Heart right ventricle (tissue), 16 donors: ENCODE measurements at regions of chr6 and their contacts with region 1.

Region 1: DNA sequence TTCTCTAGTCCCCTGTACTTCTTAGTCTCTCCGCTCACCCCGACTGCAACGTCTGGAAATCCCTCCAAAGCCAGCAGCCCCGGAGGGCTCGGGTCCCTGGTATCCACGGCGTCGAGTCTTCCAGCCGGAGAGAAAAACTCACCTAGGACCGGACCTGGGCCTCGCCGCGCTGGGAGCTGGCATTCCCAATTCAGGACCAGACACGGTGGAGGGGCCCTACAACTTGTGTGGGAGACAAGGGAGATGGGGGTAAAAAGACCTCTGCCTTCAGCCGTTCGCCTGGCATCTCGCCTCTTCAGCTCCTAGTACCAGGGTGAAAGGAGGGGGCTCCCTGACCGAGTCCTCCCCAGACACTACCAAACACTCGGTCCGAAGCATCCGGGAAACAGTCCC is 64.3 kb downstream of the GPX5 start:
- DNase-seq: no peak
- ATAC-seq: no peak
- H3K4me3 ChIP-seq: no peak overlapping the region
- H3K27ac ChIP-seq: no peak overlapping the region
- H3K4me1 ChIP-seq: peaks cover 0 to 15% (median 0%) of the 10 kb centered on the region in 9 donors
- H3K27me3 ChIP-seq: peaks cover 6 to 100% (median 93%) of the 10 kb centered on the region in 7 donors
- CTCF ChIP-seq: no peak

Region 2: DNA sequence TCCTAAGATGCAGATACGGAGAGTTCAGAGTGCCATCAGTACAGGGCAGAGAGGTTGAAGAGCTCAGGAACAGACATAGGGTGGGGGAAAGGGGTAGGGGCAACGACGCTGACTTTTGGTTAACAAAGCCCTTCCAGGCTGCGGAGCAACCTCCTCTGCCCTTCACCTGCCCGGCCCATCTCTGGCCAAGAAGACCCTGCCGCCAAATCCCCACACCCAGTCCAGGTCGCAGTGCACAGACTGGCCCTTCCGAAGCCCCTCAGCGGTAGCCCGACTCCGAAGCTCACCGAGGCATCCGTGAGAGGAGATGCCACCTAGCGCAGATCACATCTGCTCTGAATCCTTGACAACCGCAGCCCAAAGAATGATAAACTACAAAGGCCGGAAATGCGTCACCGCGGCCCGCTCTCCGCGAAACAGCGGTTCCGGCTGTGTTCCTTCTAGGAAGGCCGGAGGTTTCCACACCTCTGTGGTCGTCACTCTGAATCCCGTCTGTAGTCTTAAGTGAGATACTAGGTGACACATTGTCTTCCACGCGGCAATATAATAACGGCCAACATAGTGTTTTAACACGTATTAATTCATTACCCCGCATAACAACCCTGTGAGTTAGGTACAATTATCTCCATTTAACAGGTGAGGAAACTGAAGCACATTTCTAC is 146.7 kb before region 1 on chr6 and contains the start of gene ZSCAN23:
- intact Hi-C with region 1: no loop called
- DNase-seq: peak; percentile 71 to 77
- ATAC-seq: peak; percentile 88 to 99 (median 96)
- H3K4me3 ChIP-seq: peak within 1 kb of the TSS; percentile 48 to 93 (median 72)
- H3K27ac ChIP-seq: peak within 1 kb of the TSS in 8 of 10 donors; percentile 43 to 75 (median 62)
- H3K4me1 ChIP-seq: peaks cover 0 to 17% (median 10%) of the 10 kb centered on the region in 9 donors
- H3K27me3 ChIP-seq: peaks cover 0 to 44% (median 24%) of the 10 kb centered on the region in 7 donors
- CTCF ChIP-seq: no peak
- total RNA-seq, gene ZSCAN23: 0.98 to 2.7 (median 1.3) TPM

Region 3: GRCh38 chr6:28511628-28512300 is 78.2 kb before region 1 on chr6:
- intact Hi-C with region 1: no loop called
- DNase-seq: no peak
- ATAC-seq: no peak
- H3K4me3 ChIP-seq: no peak overlapping the region
- H3K27ac ChIP-seq: no peak overlapping the region
- H3K4me1 ChIP-seq: no peaks in the 10 kb centered on the region
- H3K27me3 ChIP-seq: peaks cover 0 to 41% (median 9%) of the 10 kb centered on the region in 7 donors
- CTCF ChIP-seq: no peak

Region 4: DNA sequence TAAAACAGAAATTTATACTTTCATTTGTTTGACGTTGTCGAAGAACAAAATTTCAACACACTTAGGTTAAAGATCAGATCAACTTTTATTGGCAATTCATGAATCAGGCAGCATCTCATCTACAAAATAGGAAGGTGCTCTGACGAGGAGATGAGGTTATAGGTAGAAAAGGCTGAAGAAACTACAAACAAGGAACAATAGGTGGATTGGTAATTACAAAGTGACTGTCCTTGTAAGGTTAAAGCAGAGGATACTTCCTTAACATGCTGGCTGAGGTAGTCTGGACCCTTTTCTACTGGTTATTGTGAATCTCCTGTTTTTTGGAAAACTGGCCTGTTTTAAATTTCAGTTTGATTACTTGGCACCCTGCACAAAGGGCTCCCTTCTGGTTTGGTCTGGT is 366.4 kb after region 1 on chr6:
- intact Hi-C with region 1: loop called in 1 of 10 experiments (anchors 5 kb)
- DNase-seq: no peak
- ATAC-seq: no peak
- H3K4me3 ChIP-seq: no peak overlapping the region
- H3K27ac ChIP-seq: no peak overlapping the region
- H3K4me1 ChIP-seq: peaks cover 0 to 14% (median 0%) of the 10 kb centered on the region in 9 donors
- H3K27me3 ChIP-seq: peaks cover 0 to 58% (median 33%) of the 10 kb centered on the region in 7 donors
- CTCF ChIP-seq: no peak